Activated CD4-positive, alpha-beta T cell treated with anti-CD3 and anti-CD28 coated beads for 36 hours (primary cell): ENCODE measurements at regions of chr3 and their contacts with region 1.

Region 1: GRCh38 chr3:32391643-32392535 is at the start of gene CMTM7:
- DNase-seq: peak; percentile 80
- ATAC-seq: peak; percentile 49
- H3K4me3 Mint-ChIP-seq: peak within 1 kb of the TSS; percentile 98
- H3K27ac Mint-ChIP-seq: peak within 1 kb of the TSS; percentile 98
- H3K4me1 Mint-ChIP-seq: peaks cover 63% of the 10 kb centered on the region
- H3K27me3 Mint-ChIP-seq: no peaks in the 10 kb centered on the region
- total RNA-seq, gene CMTM7: 41.1 to 67.0 TPM

Region 2: GRCh38 chr3:32238453-32239306 is 153.2 kb before region 1 on chr3 and contains the start of gene CMTM8:
- CTCF ChIA-PET with region 1: interaction called, 6 read pairs
- POLR2A ChIA-PET with region 1: no interaction called
- intact Hi-C with region 1: loop called in 1 of 2 experiments (anchors 5 kb)
- DNase-seq: peak; percentile 84
- ATAC-seq: peak; percentile 86
- H3K4me3 Mint-ChIP-seq: peak within 1 kb of the TSS; percentile 82
- H3K27ac Mint-ChIP-seq: peak within 1 kb of the TSS; percentile 45
- H3K4me1 Mint-ChIP-seq: peaks cover 27% of the 10 kb centered on the region
- H3K27me3 Mint-ChIP-seq: peaks cover 8% of the 10 kb centered on the region
- total RNA-seq, gene CMTM8: 8.1 to 9.3 TPM

Region 3: GRCh38 chr3:32414520-32415202 is 22.8 kb after region 1 on chr3:
- CTCF ChIA-PET with region 1: interaction called, 17 read pairs
- POLR2A ChIA-PET with region 1: no interaction called
- intact Hi-C with region 1: no loop called
- DNase-seq: peak; percentile 70
- ATAC-seq: peak; percentile 94
- H3K4me3 Mint-ChIP-seq: peak overlapping the region; percentile 28
- H3K27ac Mint-ChIP-seq: peak overlapping the region; percentile 92
- H3K4me1 Mint-ChIP-seq: peaks cover 74% of the 10 kb centered on the region
- H3K27me3 Mint-ChIP-seq: no peaks in the 10 kb centered on the region

Region 4: DNA sequence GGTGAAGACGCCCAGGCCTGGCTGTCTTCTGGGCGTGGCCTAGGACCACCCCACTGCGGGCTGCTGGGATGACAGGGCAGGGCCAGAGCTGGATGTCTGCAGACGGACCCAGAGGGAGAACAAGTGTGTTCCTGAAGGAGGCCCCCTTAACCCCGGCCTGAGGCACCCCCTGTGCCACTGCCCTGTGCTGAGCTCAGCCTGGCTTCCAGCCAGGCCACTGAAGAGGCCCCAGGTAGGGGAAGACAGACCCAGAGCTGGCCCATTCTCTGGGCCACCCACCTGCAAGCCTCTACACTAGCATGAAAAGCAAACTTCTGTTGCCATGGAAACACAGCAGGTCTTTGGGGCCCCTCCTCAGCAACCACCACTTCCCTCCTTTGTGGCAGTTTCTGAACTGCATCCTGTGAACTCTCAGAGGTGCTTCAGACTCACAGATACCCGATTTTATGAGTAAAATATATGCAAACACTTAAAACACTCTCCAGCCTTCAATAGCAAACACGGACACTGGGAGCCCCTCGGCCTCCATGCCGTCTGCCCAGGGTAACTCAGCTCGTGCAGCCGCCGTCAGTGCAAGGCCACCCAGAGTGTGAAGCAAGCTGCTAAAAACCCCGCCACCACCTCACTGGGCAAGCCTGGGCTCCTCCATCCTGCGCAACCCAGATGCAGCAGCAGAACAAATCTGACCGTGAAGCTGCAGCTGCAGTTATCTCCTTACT is 68.3 kb after region 1 on chr3:
- CTCF ChIA-PET with region 1: interaction called, 5 read pairs
- POLR2A ChIA-PET with region 1: interaction called, 4 read pairs
- intact Hi-C with region 1: loop called in 1 of 2 experiments (anchors 2 kb)
- DNase-seq: peak; percentile 81
- ATAC-seq: peak; percentile 90
- H3K4me3 Mint-ChIP-seq: peak overlapping the region; percentile 56
- H3K27ac Mint-ChIP-seq: no peak overlapping the region
- H3K4me1 Mint-ChIP-seq: peaks cover 34% of the 10 kb centered on the region
- H3K27me3 Mint-ChIP-seq: no peaks in the 10 kb centered on the region

Region 5: GRCh38 chr3:32570421-32571191 is 178.7 kb after region 1 on chr3 and contains the start of gene DYNC1LI1:
- CTCF ChIA-PET with region 1: no interaction called
- POLR2A ChIA-PET with region 1: no interaction called
- intact Hi-C with region 1: loop called in 1 of 2 experiments (anchors 5 kb)
- DNase-seq: peak; percentile 96
- ATAC-seq: peak; percentile 96
- H3K4me3 Mint-ChIP-seq: peak within 1 kb of the TSS; percentile 78
- H3K27ac Mint-ChIP-seq: peak within 1 kb of the TSS; percentile 90
- H3K4me1 Mint-ChIP-seq: peaks cover 28% of the 10 kb centered on the region
- H3K27me3 Mint-ChIP-seq: no peaks in the 10 kb centered on the region
- total RNA-seq, gene DYNC1LI1: 31.8 to 31.9 TPM